ENCODE measurements at regions of chr16 and their contacts with region 1.

Region 1: GRCh38 chr16:22300427-22301071 is 3.3 kb downstream of the POLR3E start:
- DNase-seq: peak; percentile 30
- H3K4me3 ChIP-seq: no peak overlapping the region
- H3K27ac ChIP-seq: no peak overlapping the region
- H3K27me3 ChIP-seq: no peaks in the 10 kb centered on the region
- CTCF ChIP-seq: peak; percentile 78

Region 2: DNA sequence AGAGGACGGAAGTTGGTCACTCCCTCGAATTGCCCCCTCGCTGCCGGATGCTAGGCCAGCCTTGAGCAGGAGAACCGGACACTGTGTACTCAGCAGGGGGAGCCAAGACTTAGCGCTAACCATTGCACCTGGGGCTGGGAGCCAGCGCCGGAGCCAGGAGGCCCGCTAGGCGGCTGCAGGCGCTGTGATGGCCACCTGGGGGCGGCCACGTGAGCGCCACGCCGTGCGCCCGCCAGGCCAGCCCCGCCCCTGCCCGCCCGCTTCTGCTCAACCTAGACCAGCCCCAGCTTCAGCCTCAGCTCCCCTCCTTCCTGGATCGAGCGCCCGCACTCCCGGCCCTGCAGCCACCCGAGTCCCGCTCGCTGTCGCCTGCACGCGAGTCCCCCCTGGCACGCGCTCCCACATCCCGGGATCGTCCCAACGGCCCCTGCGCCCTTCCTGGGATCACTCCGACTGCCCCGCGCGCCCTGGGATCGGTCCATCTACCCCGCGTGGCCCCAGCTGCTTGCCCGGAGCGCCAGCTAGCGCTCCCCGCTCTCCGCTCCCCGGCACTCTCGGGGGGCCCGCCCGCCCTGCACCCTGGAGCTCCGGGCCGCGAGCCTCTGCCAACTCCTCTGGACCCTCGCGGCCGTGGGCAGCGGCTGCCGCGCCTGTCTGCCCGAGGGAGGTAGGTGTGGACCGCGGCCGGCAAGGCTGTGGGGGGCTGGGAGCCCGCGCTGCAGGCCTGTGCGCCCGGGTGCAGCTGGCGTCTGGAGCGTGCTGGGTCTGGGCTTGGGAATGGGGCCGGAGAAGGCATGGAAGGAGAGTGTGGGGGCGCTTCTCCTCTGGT is 94.3 kb before region 1 on chr16 and contains the start of gene EEF2K:
- CTCF ChIA-PET with region 1: interaction called, 11 read pairs
- POLR2A ChIA-PET with region 1: interaction called, 8 read pairs
- DNase-seq: peak; percentile 86
- H3K4me3 ChIP-seq: peak within 1 kb of the TSS; percentile 78
- H3K27ac ChIP-seq: peak within 1 kb of the TSS; percentile 73
- H3K27me3 ChIP-seq: no peaks in the 10 kb centered on the region
- CTCF ChIP-seq: peak; percentile 63
- polyA plus RNA-seq, gene EEF2K: 9.6 and 13.5 TPM in 2 replicates

Region 3: DNA sequence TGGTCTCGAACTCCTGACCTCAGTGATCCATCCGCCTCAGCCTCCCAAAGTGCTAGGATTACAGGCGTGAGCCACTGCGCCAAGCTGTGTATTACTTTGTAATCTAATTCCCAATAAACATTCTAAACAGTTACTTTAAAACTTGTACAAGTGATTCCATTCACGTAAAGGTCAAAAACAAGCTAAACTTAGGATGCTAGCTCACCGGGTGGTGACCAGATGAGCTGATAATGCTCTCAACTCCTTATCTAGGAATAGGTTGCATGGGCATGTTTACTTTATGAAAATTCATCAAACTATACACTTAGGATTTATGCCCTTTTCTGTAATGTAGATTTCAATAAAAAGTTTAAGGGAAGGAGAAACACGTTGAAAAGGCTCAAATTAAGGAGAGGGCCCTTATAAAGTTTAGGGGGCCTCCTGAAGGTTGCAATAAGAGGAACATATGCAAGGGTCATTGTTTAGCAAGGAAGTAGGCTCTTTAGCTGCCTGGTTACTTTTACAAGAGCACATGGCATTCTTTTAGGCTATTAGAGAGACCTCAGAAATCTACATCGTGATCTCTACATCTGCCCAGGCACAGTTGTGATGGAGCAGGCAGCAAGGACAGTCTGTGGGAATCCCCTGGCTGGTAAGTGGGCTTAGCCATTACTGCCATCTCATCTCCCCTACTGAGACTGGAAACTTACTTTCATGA is 60.6 kb after region 1 on chr16:
- CTCF ChIA-PET with region 1: no interaction called
- POLR2A ChIA-PET with region 1: no interaction called
- DNase-seq: no peak
- H3K4me3 ChIP-seq: no peak overlapping the region
- H3K27ac ChIP-seq: no peak overlapping the region
- H3K27me3 ChIP-seq: no peaks in the 10 kb centered on the region
- CTCF ChIP-seq: no peak

Measured in AG04450 (cell line).